CD8-positive, alpha-beta memory T cell (primary cell): ENCODE measurements at regions of chr17 and their contacts with region 1.

Region 1: DNA sequence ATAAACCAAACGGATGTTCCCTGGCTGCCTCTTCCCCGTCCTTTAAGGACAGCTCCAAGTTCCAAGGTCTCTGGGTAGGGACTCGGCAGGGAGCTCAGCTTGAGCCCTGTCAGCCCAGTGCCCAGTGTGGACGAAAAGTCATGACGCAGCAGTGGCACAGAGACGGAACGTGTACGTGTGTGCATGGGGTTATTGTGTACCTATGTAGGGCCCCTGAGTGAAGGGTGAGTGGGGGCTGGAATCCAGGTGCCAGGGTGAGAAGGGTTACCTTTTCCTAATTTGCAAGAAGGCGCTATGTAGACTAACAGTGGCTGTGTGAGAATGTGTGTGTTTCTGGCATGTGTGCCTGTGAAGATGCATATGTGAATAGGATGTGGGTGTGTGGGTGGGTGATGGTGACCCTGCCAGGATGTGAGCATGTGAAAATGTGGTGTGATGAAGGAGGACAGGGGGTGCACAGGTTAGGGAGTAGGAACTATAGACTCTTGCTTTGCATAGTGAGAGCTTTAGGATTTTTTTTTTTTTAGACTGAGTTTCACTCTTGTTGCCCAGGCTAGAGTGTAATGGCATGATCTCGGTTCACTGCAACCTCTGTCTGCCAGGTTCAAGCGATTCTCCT is 6.0 kb downstream of the SCN4A start:
- DNase-seq: peak in 3 of 5 donors; percentile 26 to 73 (median 67)
- H3K4me3 ChIP-seq: no peak overlapping the region
- H3K4me3 Mint-ChIP-seq: peak overlapping the region in 5 of 7 donors; percentile 1 to 73 (median 11)
- H3K27ac ChIP-seq: no peak overlapping the region
- H3K27ac Mint-ChIP-seq: peak overlapping the region in 5 of 8 donors; percentile 0 to 17 (median 6)
- H3K4me1 ChIP-seq: peaks cover 14% of the 10 kb centered on the region
- H3K4me1 Mint-ChIP-seq: peaks cover 20 to 27% (median 26%) of the 10 kb centered on the region in 3 donors
- H3K27me3 ChIP-seq: no peaks in the 10 kb centered on the region
- H3K27me3 Mint-ChIP-seq: peaks cover 0 to 3% of the 10 kb centered on the region in 2 donors

Region 2: GRCh38 chr17:63954402-63955063 is 12.2 kb before region 1 on chr17:
- CTCF ChIA-PET with region 1: interaction called, 10 read pairs
- POLR2A ChIA-PET with region 1: no interaction called
- DNase-seq: peak in 4 of 5 donors; percentile 16 to 47 (median 32)
- H3K4me3 ChIP-seq: no peak overlapping the region
- H3K4me3 Mint-ChIP-seq: peak overlapping the region in 6 of 7 donors; percentile 48 to 87 (median 60)
- H3K27ac ChIP-seq: no peak overlapping the region
- H3K27ac Mint-ChIP-seq: peak overlapping the region in 7 of 8 donors; percentile 43 to 96 (median 85)
- H3K4me1 ChIP-seq: peaks cover 16% of the 10 kb centered on the region
- H3K4me1 Mint-ChIP-seq: peaks cover 16 to 25% (median 24%) of the 10 kb centered on the region in 3 donors
- H3K27me3 ChIP-seq: no peaks in the 10 kb centered on the region
- H3K27me3 Mint-ChIP-seq: no peaks in the 10 kb centered on the region

Region 3: DNA sequence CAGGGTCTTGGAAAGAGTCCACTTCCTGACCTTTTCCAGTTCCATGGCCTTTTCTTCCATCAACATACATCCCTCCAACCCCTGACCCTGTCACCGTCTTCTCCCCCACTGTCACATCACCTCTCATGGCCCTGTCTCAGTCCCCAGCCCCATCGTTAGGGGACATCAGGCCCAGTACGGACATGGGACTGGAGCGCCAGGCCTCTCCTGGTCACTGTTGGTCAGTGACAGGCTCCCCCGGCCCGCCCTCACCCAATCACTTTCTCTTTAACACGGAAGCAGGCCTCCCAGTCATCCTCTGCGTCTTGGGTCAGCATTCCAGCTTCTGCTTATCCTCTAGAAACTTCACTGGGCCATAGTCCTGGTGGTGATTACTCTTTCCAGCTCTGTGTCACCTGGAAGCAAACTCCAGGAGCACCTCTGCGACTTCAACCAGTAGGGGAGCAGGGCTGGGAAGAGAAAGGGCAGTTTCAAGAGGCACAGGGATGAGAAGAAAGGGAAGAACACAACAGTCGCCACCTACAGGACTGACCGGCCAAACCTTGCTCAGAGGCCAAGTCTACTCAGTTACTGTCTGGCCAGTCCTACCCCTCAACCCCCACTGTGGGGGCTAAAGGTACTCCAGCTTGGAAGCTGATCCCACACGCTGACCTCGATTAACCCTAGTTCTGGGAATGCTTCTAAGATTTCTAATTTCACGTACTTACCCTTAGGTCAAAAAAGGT is 69.6 kb after region 1 on chr17:
- CTCF ChIA-PET with region 1: no interaction called
- POLR2A ChIA-PET with region 1: no interaction called
- DNase-seq: no peak
- H3K4me3 ChIP-seq: no peak overlapping the region
- H3K4me3 Mint-ChIP-seq: no peak overlapping the region
- H3K27ac ChIP-seq: no peak overlapping the region
- H3K27ac Mint-ChIP-seq: peak overlapping the region in 5 of 8 donors; percentile 26 to 95 (median 48)
- H3K4me1 ChIP-seq: no peaks in the 10 kb centered on the region
- H3K4me1 Mint-ChIP-seq: peaks cover 0 to 12% (median 8%) of the 10 kb centered on the region in 3 donors
- H3K27me3 ChIP-seq: no peaks in the 10 kb centered on the region
- H3K27me3 Mint-ChIP-seq: no peaks in the 10 kb centered on the region

Region 4: DNA sequence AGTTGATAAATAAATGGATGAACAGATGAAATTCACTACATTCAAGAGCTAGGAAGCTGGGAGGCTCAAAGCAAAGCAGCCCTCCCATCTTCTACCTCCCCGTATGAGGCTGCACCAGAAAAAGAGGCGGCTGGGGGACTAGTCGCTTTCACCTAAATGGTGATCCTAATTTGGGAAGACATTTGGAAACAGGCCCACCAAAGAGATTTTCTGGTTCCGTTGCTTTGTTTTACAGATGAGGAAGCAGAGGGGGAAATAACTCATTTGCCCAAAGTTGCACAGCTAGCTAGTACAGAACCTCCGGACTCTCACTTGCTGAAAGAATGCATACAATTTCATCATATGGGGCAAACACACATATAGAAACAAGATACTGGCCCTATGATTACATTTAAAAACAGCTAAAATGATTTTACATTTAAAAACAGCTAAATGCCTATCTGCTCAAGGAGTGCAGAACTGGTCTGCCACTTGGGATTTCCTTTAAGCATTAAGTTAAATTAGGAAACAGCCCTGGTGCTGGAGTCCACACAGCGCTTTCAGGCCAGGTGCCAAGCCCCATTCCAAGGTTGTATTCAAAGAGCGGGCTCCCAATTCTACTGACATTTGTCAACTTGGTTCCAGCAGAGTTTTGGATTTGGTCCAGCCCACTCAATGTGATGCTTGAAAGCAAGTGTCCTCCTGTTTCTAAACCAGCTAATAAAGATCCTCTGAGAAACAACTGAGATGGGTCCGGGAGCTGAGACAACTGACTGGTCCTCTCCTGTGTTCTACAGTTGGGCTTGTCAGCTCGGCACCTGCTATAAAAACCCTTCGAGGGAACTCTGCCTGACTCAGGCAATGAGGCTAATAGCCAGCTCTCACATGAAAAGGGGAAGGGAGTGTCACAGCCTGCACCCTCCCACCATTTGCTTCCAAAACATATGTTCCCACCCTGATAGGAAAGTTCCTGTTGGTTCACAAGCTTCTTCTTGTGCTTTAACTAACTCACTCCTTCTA is 151.5 kb after region 1 on chr17:
- CTCF ChIA-PET with region 1: no interaction called
- POLR2A ChIA-PET with region 1: no interaction called
- DNase-seq: no peak
- H3K4me3 ChIP-seq: no peak overlapping the region
- H3K4me3 Mint-ChIP-seq: peak overlapping the region in 2 of 7 donors; percentile 32 to 70
- H3K27ac ChIP-seq: no peak overlapping the region
- H3K27ac Mint-ChIP-seq: peak overlapping the region in 6 of 8 donors; percentile 4 to 68 (median 48)
- H3K4me1 ChIP-seq: peaks cover 53% of the 10 kb centered on the region
- H3K4me1 Mint-ChIP-seq: peaks cover 62 to 82% (median 79%) of the 10 kb centered on the region in 3 donors
- H3K27me3 ChIP-seq: no peaks in the 10 kb centered on the region
- H3K27me3 Mint-ChIP-seq: no peaks in the 10 kb centered on the region